CD4-positive, alpha-beta memory T cell (primary cell): ENCODE measurements at regions of chrX and their contacts with region 1.

Region 1: DNA sequence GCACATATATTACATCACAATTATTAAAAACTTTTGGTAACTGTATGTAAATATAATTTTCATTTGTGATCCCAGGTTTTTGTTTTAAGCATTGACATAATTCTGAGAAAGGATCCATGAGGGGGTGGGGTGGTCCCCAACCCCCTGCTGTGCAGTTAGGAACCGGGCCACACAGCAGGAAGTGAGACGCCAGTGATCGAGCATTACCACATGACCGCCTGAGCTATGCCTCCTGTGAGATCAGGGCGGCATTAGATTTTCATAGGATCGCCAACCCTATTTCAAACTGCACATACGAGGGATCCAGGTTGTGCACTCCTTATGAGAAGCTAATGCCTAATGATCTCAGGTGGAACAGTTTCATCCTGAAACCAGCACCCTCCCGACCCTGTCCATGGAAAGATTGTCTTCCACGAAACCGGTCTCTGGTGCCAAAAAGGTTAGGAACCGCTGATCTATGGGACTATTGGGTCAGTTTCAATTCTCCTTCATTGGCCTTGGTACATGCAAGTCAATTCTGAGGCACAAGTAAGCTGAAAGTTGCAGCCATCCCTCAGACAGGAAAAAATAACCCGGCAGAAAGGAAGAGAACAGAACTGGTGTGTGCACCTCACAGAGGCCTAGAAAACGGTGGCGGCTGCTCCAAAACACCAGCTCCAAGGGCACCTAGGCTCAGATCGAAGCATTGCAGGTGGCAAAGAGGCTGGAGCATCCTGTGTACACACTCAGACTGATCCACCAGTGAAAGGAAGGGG is 7.0 kb upstream of the TMSB4X start:
- DNase-seq: peak in 1 of 5 donors; percentile 24
- H3K4me3 ChIP-seq: peak overlapping the region; percentile 11 to 42
- H3K4me3 Mint-ChIP-seq: peak overlapping the region; percentile 62 to 87 (median 76)
- H3K27ac ChIP-seq: peak overlapping the region; percentile 72
- H3K27ac Mint-ChIP-seq: peak overlapping the region; percentile 94 to 100 (median 96)
- H3K4me1 ChIP-seq: peaks cover 57% of the 10 kb centered on the region
- H3K4me1 Mint-ChIP-seq: peaks cover 26 to 65% (median 43%) of the 10 kb centered on the region in 4 donors
- H3K27me3 ChIP-seq: no peaks in the 10 kb centered on the region
- H3K27me3 Mint-ChIP-seq: no peaks in the 10 kb centered on the region

Region 2: DNA sequence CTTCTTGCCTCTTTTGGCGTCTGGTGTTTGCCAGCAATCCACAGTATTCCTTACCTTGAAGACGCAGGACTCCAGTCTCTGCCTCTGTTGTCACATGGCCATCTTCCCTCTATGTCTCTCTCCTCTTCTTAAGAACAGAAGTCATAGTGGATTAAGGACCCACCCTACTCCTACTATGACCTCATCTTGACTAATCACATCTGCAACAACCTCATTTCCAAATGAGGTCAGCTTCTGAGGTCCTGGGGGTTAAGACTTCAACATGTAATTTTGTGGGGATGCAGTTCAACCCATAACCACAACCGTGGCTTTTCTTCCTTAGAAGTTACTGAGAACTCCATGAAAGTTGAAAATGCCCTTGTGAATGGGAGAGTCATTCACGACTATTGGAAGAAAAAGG is 38.2 kb before region 1 on chrX:
- CTCF ChIA-PET with region 1: no interaction called
- POLR2A ChIA-PET with region 1: no interaction called
- intact Hi-C with region 1: no loop called
- DNase-seq: no peak
- H3K4me3 ChIP-seq: no peak overlapping the region
- H3K4me3 Mint-ChIP-seq: no peak overlapping the region
- H3K27ac ChIP-seq: no peak overlapping the region
- H3K27ac Mint-ChIP-seq: no peak overlapping the region
- H3K4me1 ChIP-seq: no peaks in the 10 kb centered on the region
- H3K4me1 Mint-ChIP-seq: no peaks in the 10 kb centered on the region
- H3K27me3 ChIP-seq: no peaks in the 10 kb centered on the region
- H3K27me3 Mint-ChIP-seq: peaks cover 1 to 2% of the 10 kb centered on the region in 2 donors

Region 3: GRCh38 chrX:12955882-12956703 is 11.8 kb before region 1 on chrX:
- CTCF ChIA-PET with region 1: interaction called, 108 read pairs
- POLR2A ChIA-PET with region 1: interaction called, 1,441 read pairs
- intact Hi-C with region 1: loop called (anchors 1 kb)
- DNase-seq: peak; percentile 52 to 84 (median 65)
- H3K4me3 ChIP-seq: peak overlapping the region; percentile 23 to 51
- H3K4me3 Mint-ChIP-seq: peak overlapping the region; percentile 80 to 92 (median 86)
- H3K27ac ChIP-seq: peak overlapping the region; percentile 88
- H3K27ac Mint-ChIP-seq: peak overlapping the region; percentile 94 to 99 (median 97)
- H3K4me1 ChIP-seq: peaks cover 96% of the 10 kb centered on the region
- H3K4me1 Mint-ChIP-seq: peaks cover 42 to 90% (median 73%) of the 10 kb centered on the region in 4 donors
- H3K27me3 ChIP-seq: no peaks in the 10 kb centered on the region
- H3K27me3 Mint-ChIP-seq: no peaks in the 10 kb centered on the region

Region 4: GRCh38 chrX:13151828-13152510 is 184.1 kb after region 1 on chrX:
- CTCF ChIA-PET with region 1: no interaction called
- POLR2A ChIA-PET with region 1: no interaction called
- intact Hi-C with region 1: no loop called
- DNase-seq: peak; percentile 76 to 89 (median 84)
- H3K4me3 ChIP-seq: no peak overlapping the region
- H3K4me3 Mint-ChIP-seq: peak overlapping the region; percentile 32 to 73 (median 58)
- H3K27ac ChIP-seq: peak overlapping the region; percentile 51
- H3K27ac Mint-ChIP-seq: peak overlapping the region; percentile 88 to 97 (median 94)
- H3K4me1 ChIP-seq: peaks cover 22% of the 10 kb centered on the region
- H3K4me1 Mint-ChIP-seq: peaks cover 10 to 34% (median 17%) of the 10 kb centered on the region in 4 donors
- H3K27me3 ChIP-seq: no peaks in the 10 kb centered on the region
- H3K27me3 Mint-ChIP-seq: no peaks in the 10 kb centered on the region